Activated CD4-positive, alpha-beta memory T cell treated with anti-CD3 and anti-CD28 coated beads for 36 hours (primary cell): ENCODE measurements at regions of chr12 and their contacts with region 1.

Region 1: DNA sequence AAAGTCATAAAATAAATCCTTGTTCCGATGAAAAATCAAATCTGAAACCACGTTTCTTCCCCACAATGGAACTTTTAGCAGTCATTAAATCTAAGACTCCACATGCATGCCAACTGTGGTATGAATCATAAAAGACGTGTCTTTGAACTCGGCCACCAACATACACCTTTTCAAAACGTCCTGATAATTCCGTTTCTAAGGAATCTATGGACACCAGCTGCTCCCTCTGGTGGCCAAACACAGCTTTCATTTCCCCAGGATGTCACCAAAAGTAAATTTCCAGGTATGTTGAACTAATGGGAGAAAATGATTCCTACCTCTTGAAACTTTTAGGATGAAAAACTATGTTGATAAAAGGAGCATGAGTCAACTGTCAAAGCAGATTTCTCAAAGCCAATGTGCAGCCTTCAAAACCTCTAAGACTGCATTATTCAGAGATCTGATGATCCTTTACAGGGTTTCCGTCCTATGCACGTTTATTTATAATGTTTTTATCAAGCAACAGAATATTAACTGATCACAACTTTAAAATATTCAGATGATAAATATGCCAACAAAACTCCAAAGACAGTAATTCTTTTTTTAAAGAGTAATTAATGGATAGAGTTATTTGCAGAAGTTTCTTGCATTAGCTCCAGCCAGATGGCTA is 96.2 kb downstream of the CIT start:
- DNase-seq: no peak
- H3K4me3 Mint-ChIP-seq: no peak overlapping the region
- H3K27ac Mint-ChIP-seq: no peak overlapping the region
- H3K4me1 Mint-ChIP-seq: peaks cover 7% of the 10 kb centered on the region
- H3K27me3 Mint-ChIP-seq: no peaks in the 10 kb centered on the region

Region 2: GRCh38 chr12:119681961-119682638 is 98.8 kb before region 1 on chr12:
- CTCF ChIA-PET with region 1: no interaction called
- POLR2A ChIA-PET with region 1: no interaction called
- intact Hi-C with region 1: loop called (anchors 10 kb)
- DNase-seq: peak; percentile 48
- H3K4me3 Mint-ChIP-seq: no peak overlapping the region
- H3K27ac Mint-ChIP-seq: peak overlapping the region; percentile 66
- H3K4me1 Mint-ChIP-seq: peaks cover 16% of the 10 kb centered on the region
- H3K27me3 Mint-ChIP-seq: no peaks in the 10 kb centered on the region

Region 3: DNA sequence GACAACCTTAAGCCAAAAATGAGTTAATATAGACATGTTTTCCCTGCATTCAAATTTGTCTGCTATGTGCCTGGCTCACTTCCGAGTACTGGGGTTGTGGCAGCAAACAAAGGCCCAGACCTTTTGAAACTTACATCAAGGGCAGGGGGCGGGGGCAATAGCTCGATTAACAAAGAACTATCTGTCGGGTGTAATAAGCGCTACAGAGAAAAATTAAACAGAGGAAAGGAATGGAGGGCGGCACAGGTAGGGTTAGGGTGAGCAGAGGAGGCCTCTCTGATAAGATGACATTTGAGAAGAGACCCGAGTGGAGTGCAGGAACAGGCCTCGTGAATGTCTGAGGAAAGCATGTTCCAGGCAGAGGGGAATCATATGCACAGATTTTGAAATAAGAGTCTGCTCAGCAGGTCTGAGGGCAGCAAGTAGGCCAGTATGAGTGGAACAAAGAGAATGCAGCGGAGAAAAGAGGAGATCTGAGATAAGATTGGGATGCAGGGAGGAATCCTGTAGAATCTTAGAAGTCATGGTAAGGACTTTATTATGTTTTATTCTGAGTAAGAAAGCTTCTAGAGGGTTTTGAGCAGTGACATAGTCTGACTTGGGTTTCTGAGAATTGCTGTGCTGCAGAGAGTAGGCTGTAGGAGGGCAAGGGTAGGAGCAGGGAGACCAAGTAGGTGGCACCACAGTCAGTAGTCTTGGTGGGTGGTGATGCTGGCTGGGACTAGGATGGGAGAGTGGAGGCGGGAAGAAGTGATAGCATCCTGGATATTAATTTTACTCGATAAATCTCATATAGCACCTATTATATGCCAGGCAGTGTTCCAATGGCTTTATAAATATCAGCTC is 260.7 kb after region 1 on chr12:
- CTCF ChIA-PET with region 1: no interaction called
- POLR2A ChIA-PET with region 1: no interaction called
- intact Hi-C with region 1: no loop called
- DNase-seq: peak; percentile 44
- H3K4me3 Mint-ChIP-seq: no peak overlapping the region
- H3K27ac Mint-ChIP-seq: peak overlapping the region; percentile 74
- H3K4me1 Mint-ChIP-seq: peaks cover 32% of the 10 kb centered on the region
- H3K27me3 Mint-ChIP-seq: no peaks in the 10 kb centered on the region